ENCODE measurements at regions of chr7 and their contacts with region 1.

Region 1: DNA sequence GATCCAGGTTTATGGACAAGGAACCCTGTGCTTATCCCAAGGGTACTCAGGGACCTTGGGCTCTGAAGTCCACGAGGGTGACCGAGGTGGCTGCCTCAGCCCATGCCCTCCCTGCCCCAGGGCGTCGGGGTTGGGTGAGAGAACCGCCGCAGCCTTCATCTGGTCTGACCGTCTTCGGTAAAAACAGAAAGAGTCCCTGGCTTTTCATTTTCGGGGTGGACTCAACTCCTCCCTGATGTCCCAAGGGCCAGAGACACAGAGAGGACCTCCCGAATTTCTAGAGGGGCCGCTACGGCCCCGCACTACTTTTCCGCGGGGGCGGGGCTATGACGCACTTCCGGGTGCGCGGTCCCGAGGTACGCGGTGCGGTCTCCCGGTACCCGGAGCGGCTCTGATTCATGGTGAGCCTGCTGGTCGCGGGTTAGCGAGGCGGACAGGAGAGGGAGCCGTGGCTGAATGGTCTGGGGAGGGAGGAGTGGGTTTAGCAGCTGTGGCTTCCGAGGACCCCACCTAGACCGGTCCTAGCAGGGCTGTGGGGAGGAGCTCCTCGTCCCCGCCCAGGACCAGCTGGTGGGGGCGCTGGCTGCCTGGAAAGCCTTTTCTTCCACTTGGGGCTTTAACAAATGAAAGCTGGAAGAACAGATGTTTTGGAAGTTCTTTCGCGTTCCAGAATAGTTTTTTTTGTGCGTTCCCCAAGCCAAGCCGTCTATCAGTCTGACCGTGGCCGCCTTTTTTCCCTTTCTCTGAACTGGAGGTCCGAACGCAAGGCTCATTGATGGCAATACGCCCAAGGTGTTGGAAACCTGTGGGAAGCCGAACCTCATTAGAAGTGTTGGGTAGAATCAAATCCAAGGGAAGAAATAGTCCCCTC is at the start of gene ZSCAN21:
- DNase-seq: peak; percentile 73
- H3K4me3 Mint-ChIP-seq: peak within 1 kb of the TSS; percentile 82
- H3K27ac Mint-ChIP-seq: peak within 1 kb of the TSS; percentile 91
- H3K4me1 Mint-ChIP-seq: peaks cover 10% of the 10 kb centered on the region
- H3K27me3 Mint-ChIP-seq: no peaks in the 10 kb centered on the region
- CTCF ChIP-seq: peak; percentile 12
- total RNA-seq, gene ZSCAN21: 13.8 and 14.7 TPM in 2 replicates

Region 2: DNA sequence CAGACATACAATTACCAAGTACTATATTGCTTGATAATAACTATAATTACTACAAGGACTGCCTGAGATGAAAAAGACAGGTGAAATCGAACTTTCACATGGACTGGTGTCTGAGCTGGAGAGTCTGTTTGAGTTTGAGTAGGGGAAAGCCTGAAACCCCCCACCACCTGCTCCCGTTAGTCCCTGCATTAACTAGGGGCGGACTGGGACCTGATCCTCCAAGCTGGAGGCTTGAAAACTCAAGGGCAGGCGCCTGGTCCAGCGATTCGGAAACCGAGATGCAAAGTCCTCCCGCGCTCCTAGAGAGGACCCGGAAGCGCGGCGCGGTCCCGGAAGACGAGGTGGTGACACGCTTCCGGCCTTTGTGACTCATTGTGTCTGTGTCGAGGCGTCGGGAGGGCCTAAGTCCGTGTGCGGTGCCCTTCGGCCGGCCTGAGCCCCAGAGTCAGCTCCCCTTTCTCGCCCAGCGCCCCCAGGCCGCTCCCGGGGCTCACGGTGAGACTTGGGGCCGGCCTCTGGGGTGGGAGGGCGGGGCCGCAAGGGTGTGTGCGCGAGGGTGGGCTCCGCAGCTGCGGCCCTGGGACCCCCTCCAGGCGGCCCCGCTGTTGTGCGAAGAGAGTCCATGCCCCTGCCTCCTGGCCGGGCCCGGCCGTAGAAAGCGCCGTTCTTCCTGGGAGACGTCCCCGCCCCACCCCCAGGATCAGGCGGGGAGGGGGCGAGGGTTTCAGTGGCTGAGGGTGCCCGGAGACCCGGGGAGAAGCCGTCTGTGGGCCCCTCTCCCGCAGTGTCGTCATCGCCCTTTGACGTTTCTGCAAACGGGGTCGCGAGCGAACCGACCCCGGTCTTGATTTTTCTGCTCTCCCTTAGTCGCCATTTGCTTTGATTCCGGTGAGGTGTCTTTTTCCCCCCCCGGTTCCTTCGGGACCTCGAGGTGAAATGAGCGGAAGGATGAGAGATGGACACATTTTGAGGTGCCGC is 34.2 kb before region 1 on chr7 and contains the start of gene ZKSCAN1:
- CTCF ChIA-PET with region 1: interaction called, 5 read pairs
- POLR2A ChIA-PET with region 1: interaction called, 15 read pairs
- intact Hi-C with region 1: no loop called
- DNase-seq: peak; percentile 95
- H3K4me3 Mint-ChIP-seq: peak within 1 kb of the TSS; percentile 80
- H3K27ac Mint-ChIP-seq: peak within 1 kb of the TSS; percentile 76
- H3K4me1 Mint-ChIP-seq: peaks cover 12% of the 10 kb centered on the region
- H3K27me3 Mint-ChIP-seq: no peaks in the 10 kb centered on the region
- CTCF ChIP-seq: no peak
- total RNA-seq, gene ZKSCAN1: 80.2 and 86.2 TPM in 2 replicates

Region 3: GRCh38 chr7:100022665-100023064 is 27.0 kb before region 1 on chr7:
- CTCF ChIA-PET with region 1: interaction called, 4 read pairs
- POLR2A ChIA-PET with region 1: interaction called, 13 read pairs
- intact Hi-C with region 1: no loop called
- DNase-seq: peak; percentile 78
- H3K4me3 Mint-ChIP-seq: peak overlapping the region; percentile 49
- H3K27ac Mint-ChIP-seq: peak overlapping the region; percentile 66
- H3K4me1 Mint-ChIP-seq: peaks cover 31% of the 10 kb centered on the region
- H3K27me3 Mint-ChIP-seq: no peaks in the 10 kb centered on the region
- CTCF ChIP-seq: no peak

Region 4: GRCh38 chr7:100066953-100067352 is 17.3 kb after region 1 on chr7:
- CTCF ChIA-PET with region 1: interaction called, 10 read pairs
- POLR2A ChIA-PET with region 1: interaction called, 3 read pairs
- intact Hi-C with region 1: no loop called
- DNase-seq: no peak
- H3K4me3 Mint-ChIP-seq: no peak overlapping the region
- H3K27ac Mint-ChIP-seq: no peak overlapping the region
- H3K4me1 Mint-ChIP-seq: no peaks in the 10 kb centered on the region
- H3K27me3 Mint-ChIP-seq: no peaks in the 10 kb centered on the region
- CTCF ChIP-seq: no peak

Region 5: GRCh38 chr7:100247152-100247757 is 197.6 kb after region 1 on chr7:
- CTCF ChIA-PET with region 1: no interaction called
- POLR2A ChIA-PET with region 1: no interaction called
- intact Hi-C with region 1: no loop called
- DNase-seq: peak; percentile 93
- H3K4me3 Mint-ChIP-seq: no peak overlapping the region
- H3K27ac Mint-ChIP-seq: no peak overlapping the region
- H3K4me1 Mint-ChIP-seq: peaks cover 19% of the 10 kb centered on the region
- H3K27me3 Mint-ChIP-seq: no peaks in the 10 kb centered on the region
- CTCF ChIP-seq: peak; percentile 7

Region 6: DNA sequence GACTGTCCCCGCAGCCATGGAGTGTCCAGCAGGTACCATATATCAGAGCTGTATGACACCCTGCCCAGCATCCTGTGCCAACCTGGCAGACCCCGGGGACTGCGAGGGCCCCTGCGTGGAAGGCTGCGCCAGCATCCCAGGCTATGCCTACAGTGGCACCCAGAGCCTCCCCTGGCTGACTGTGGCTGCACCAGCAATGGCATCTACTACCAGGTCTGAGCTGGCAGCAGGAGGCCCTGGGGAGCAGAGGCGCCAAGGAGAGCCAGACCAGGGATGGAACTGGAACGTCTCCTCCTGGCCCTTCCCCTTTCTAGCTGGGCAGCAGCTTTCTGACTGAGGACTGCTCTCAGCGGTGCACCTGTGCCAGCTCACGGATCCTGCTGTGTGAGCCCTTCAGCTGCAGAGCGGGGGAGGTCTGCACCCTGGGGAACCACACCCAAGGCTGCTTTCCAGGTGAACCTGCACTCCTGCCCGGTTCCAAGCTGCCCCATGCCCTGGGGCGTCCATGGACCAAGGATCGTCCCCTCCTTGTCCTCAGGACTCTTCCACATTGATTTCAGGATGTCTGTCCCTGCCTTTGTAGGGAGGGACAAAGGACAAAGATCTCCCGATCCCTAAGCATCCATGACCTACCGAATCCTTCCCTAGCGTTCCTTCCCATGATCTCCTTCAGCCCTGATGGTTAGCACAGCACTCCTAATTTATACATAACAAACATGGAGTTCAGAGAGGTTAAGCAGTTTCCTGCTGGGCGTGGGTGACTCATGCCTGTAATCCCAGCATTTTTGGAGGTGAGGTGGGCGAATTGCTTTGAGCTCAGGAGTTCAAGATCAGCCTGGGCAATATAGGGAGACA is 744.4 kb after region 1 on chr7:
- CTCF ChIA-PET with region 1: no interaction called
- POLR2A ChIA-PET with region 1: no interaction called
- intact Hi-C with region 1: no loop called
- DNase-seq: peak; percentile 54
- H3K4me3 Mint-ChIP-seq: no peak overlapping the region
- H3K27ac Mint-ChIP-seq: no peak overlapping the region
- H3K4me1 Mint-ChIP-seq: peaks cover 9% of the 10 kb centered on the region
- H3K27me3 Mint-ChIP-seq: no peaks in the 10 kb centered on the region
- CTCF ChIP-seq: no peak

Measured in MCF 10A (cell line).